ENCODE measurements at regions of chr18 and their contacts with region 1.

Region 1: GRCh38 chr18:2985628-2986027 is 27.3 kb downstream of the LPIN2 start:
- DNase-seq: peak in 3 of 9 experiments; percentile 30 to 78 (median 67)
- ATAC-seq: peak; percentile 69
- H3K4me3 ChIP-seq: no peak overlapping the region
- H3K4me3 Mint-ChIP-seq: no peak overlapping the region
- H3K27ac ChIP-seq: no peak overlapping the region
- H3K27ac Mint-ChIP-seq: no peak overlapping the region
- H3K4me1 ChIP-seq: peaks cover 30% of the 10 kb centered on the region
- H3K4me1 Mint-ChIP-seq: peaks cover 52% of the 10 kb centered on the region
- H3K27me3 ChIP-seq: no peaks in the 10 kb centered on the region
- H3K27me3 Mint-ChIP-seq: no peaks in the 10 kb centered on the region
- CTCF ChIP-seq: peak; percentile 82

Region 2: GRCh38 chr18:2776601-2777000 is 209.0 kb before region 1 on chr18:
- CTCF ChIA-PET with region 1: interaction called, 3 read pairs
- POLR2A ChIA-PET with region 1: no interaction called
- intact Hi-C with region 1: loop called in 1 of 2 experiments (anchors 10 kb)
- DNase-seq: no peak
- ATAC-seq: no peak
- H3K4me3 ChIP-seq: no peak overlapping the region
- H3K4me3 Mint-ChIP-seq: no peak overlapping the region
- H3K27ac ChIP-seq: no peak overlapping the region
- H3K27ac Mint-ChIP-seq: no peak overlapping the region
- H3K4me1 ChIP-seq: no peaks in the 10 kb centered on the region
- H3K4me1 Mint-ChIP-seq: peaks cover 2% of the 10 kb centered on the region
- H3K27me3 ChIP-seq: no peaks in the 10 kb centered on the region
- H3K27me3 Mint-ChIP-seq: no peaks in the 10 kb centered on the region
- CTCF ChIP-seq: no peak

Region 3: GRCh38 chr18:2932247-2933181 is 53.1 kb before region 1 on chr18:
- CTCF ChIA-PET with region 1: interaction called, 205 read pairs
- POLR2A ChIA-PET with region 1: interaction called, 9 read pairs
- intact Hi-C with region 1: loop called (anchors 1 kb)
- DNase-seq: peak in 6 of 9 experiments; percentile 37 to 82 (median 52)
- ATAC-seq: peak; percentile 79
- H3K4me3 ChIP-seq: no peak overlapping the region
- H3K4me3 Mint-ChIP-seq: no peak overlapping the region
- H3K27ac ChIP-seq: peak overlapping the region in 1 of 2 experiments; percentile 51
- H3K27ac Mint-ChIP-seq: peak overlapping the region; percentile 89
- H3K4me1 ChIP-seq: peaks cover 6% of the 10 kb centered on the region
- H3K4me1 Mint-ChIP-seq: peaks cover 23% of the 10 kb centered on the region
- H3K27me3 ChIP-seq: no peaks in the 10 kb centered on the region
- H3K27me3 Mint-ChIP-seq: no peaks in the 10 kb centered on the region
- CTCF ChIP-seq: peak; percentile 96

Region 4: GRCh38 chr18:2958819-2959298 is 26.8 kb before region 1 on chr18:
- CTCF ChIA-PET with region 1: interaction called, 127 read pairs
- POLR2A ChIA-PET with region 1: interaction called, 16 read pairs
- intact Hi-C with region 1: loop called (anchors 1 to 2 kb)
- DNase-seq: peak in 2 of 9 experiments; percentile 49 to 70
- ATAC-seq: no peak
- H3K4me3 ChIP-seq: no peak overlapping the region
- H3K4me3 Mint-ChIP-seq: peak overlapping the region; percentile 50
- H3K27ac ChIP-seq: peak overlapping the region; percentile 65 to 90
- H3K27ac Mint-ChIP-seq: peak overlapping the region; percentile 97
- H3K4me1 ChIP-seq: peaks cover 92% of the 10 kb centered on the region
- H3K4me1 Mint-ChIP-seq: peaks cover 89% of the 10 kb centered on the region
- H3K27me3 ChIP-seq: no peaks in the 10 kb centered on the region
- H3K27me3 Mint-ChIP-seq: no peaks in the 10 kb centered on the region
- CTCF ChIP-seq: no peak

Region 5: DNA sequence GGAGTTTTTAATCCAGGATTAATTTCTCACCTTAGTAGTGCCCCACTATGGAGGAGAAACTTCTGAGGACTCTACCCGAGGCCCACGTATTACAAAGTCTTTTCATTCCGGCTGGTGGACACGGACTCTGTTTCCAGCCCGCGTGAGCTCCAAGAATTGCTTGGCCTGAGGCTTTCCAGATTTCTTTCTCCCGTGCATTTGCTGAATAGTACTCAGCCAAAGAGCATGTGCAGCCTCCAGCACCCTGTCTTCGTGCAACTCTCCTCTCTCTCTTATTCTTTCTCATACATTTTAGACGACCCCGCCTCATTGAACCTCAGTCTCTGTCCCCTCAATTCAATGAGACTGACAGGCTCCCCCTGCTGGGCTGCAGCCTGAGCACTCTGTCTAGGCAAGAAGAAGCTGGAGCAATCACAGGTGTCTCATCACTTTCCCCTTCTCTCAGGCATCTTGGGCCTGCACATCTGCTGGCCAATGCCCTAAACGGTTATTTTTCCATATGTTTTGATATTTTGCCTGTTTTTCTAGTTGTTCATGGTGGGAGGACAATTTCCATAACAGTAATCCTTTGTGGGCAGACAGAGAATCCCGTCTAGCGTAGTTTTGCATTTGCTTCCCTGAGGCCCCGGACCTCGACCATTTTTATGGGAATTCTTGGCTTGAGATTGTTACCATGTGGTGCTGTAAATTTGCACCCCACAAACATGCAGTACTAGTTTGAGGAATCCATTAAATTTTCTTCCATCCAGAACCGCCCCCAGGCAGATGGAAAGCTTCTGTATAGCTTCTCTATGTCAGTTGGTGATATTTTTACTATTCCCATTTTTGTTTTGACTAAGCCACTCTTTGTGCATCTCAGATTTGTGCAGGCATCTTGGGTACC is 77.4 kb after region 1 on chr18:
- CTCF ChIA-PET with region 1: interaction called, 46 read pairs
- POLR2A ChIA-PET with region 1: interaction called, 3 read pairs
- intact Hi-C with region 1: no loop called
- DNase-seq: peak; percentile 42 to 79 (median 72)
- ATAC-seq: peak; percentile 27
- H3K4me3 ChIP-seq: no peak overlapping the region
- H3K4me3 Mint-ChIP-seq: peak overlapping the region; percentile 58
- H3K27ac ChIP-seq: peak overlapping the region; percentile 88 to 95
- H3K27ac Mint-ChIP-seq: peak overlapping the region; percentile 93
- H3K4me1 ChIP-seq: peaks cover 58% of the 10 kb centered on the region
- H3K4me1 Mint-ChIP-seq: peaks cover 67% of the 10 kb centered on the region
- H3K27me3 ChIP-seq: no peaks in the 10 kb centered on the region
- H3K27me3 Mint-ChIP-seq: no peaks in the 10 kb centered on the region
- CTCF ChIP-seq: peak; percentile 85

Region 6: GRCh38 chr18:3245853-3246634 is 260.4 kb after region 1 on chr18:
- CTCF ChIA-PET with region 1: interaction called, 10 read pairs
- POLR2A ChIA-PET with region 1: interaction called, 6 read pairs
- intact Hi-C with region 1: loop called in 1 of 2 experiments (anchors 2 kb)
- DNase-seq: peak; percentile 44 to 89 (median 78)
- ATAC-seq: peak; percentile 60
- H3K4me3 ChIP-seq: peak overlapping the region; percentile 77 to 90
- H3K4me3 Mint-ChIP-seq: peak overlapping the region; percentile 92
- H3K27ac ChIP-seq: peak overlapping the region; percentile 79 to 89
- H3K27ac Mint-ChIP-seq: peak overlapping the region; percentile 90
- H3K4me1 ChIP-seq: peaks cover 11% of the 10 kb centered on the region
- H3K4me1 Mint-ChIP-seq: peaks cover 39% of the 10 kb centered on the region
- H3K27me3 ChIP-seq: no peaks in the 10 kb centered on the region
- H3K27me3 Mint-ChIP-seq: no peaks in the 10 kb centered on the region
- CTCF ChIP-seq: peak; percentile 84